PC-3 (cell line): ENCODE measurements at regions of chr3 and their contacts with region 1.

Region 1: DNA sequence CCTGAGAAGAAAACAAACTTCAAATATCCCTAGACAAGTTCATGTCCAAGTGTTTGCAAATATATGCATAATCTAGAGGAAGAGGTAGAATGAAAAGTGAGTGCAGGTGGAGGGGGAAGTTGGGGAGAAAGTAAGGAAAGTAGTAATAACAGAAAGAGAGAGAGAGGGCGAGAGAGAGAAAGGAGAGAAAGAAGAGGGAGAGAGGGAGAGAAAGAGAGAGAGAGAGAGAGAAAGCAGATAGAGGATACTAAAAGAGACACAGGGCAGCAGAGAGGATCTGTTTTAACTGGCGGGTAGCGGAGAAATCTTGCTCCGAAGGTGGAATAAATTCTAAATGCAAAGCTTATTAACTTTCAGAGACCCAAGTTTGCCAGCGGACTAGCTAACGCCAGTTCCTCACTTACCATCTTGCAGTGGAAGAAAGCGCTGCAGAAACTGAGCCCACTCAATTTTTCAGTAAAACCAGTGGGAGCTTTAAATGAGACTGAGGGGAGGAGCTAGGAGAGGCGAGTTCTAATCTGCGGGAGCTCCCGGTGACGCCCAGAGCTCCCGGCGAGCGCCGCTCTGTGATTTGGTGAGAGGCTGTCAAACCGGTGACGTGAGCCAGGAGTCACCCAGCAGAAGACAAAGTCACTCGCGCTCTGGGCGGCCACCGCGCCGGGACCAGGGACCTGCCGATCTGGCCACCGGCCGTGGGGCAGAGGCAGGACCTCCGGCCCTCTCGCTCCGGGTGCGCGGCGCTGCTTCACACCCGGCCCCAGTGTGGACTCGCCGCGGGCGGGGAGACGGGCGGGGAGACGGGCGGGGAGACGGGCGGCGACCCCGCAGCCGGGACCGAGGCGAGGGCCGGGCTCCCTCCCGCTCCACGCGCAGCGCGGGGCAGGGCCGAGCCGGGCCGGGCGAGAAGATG is at the start of gene GMNC:
- DNase-seq: peak; percentile 85
- ATAC-seq: peak; percentile 98
- H3K4me3 ChIP-seq: peak within 1 kb of the TSS; percentile 89
- H3K27ac ChIP-seq: no peak within 1 kb of the TSS
- H3K4me1 ChIP-seq: no peaks in the 10 kb centered on the region
- H3K27me3 ChIP-seq: no peaks in the 10 kb centered on the region
- CTCF ChIP-seq: no peak
- total RNA-seq, gene GMNC: 0.06 TPM in 1 of 2 replicates, not detected in the other

Region 2: DNA sequence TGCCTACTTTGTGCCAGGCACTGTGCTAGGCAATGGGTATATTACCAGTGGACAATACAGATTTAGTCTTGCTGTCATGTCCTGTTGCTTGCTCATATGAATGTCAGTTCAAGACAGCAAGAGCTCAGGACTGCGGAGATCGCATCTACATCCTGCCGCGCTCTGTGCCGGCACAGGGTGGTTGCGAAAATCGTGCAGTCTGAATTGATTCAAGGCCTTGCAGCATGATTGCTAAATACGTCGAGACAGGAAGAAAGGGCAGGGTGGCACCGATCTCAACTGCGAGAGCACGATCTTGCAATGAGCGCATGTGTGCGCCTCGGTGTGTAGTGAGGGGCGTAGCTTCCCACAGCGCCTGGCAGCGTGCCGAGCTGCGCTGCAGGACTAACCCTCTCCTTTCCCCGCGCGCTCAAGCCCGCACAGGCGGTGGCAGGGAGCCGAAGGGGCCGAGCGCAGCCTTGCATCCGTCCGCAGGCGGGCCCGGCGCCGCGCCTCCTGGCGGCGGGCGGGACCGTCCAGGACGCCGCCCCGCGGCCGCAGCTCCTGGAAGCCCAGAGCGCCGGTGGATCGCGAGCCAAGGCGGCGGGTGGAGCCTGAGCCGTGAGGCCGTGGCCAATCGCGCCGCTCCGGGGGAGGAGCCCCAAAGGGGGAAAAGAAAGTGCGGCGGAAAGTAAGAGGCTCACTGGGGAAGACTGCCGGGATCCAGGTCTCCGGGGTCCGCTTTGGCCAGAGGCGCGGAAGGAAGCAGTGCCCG is 348.9 kb before region 1 on chr3 and contains the start of gene IL1RAP:
- CTCF ChIA-PET with region 1: no interaction called
- POLR2A ChIA-PET with region 1: no interaction called
- intact Hi-C with region 1: loop called (anchors 10 kb)
- DNase-seq: peak; percentile 96
- ATAC-seq: peak; percentile 91
- H3K4me3 ChIP-seq: peak within 1 kb of the TSS; percentile 95
- H3K27ac ChIP-seq: peak within 1 kb of the TSS; percentile 24
- H3K4me1 ChIP-seq: peaks cover 40% of the 10 kb centered on the region
- H3K27me3 ChIP-seq: no peaks in the 10 kb centered on the region
- CTCF ChIP-seq: peak; percentile 65
- total RNA-seq, gene IL1RAP: 5.0 and 13.4 TPM in 2 replicates

Region 3: DNA sequence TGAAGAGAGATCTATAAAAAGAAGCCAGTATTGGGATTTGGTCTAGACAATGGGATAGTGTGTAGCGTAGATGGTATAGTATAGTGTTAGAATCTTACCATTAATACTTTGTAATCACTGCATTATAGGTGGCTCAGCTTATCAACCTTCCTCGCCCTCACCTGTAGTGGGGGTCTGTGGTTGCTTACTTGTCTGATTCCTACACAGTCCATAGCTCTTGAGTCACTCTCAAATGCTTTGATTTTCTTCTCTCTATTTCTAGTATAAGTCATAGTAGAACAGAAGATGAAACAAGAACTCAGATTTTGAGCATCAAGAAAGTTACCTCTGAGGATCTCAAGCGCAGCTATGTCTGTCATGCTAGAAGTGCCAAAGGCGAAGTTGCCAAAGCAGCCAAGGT is 233.4 kb before region 1 on chr3:
- CTCF ChIA-PET with region 1: no interaction called
- POLR2A ChIA-PET with region 1: no interaction called
- intact Hi-C with region 1: no loop called
- DNase-seq: no peak
- ATAC-seq: no peak
- H3K4me3 ChIP-seq: no peak overlapping the region
- H3K27ac ChIP-seq: no peak overlapping the region
- H3K4me1 ChIP-seq: no peaks in the 10 kb centered on the region
- H3K27me3 ChIP-seq: no peaks in the 10 kb centered on the region
- CTCF ChIP-seq: no peak

Region 4: DNA sequence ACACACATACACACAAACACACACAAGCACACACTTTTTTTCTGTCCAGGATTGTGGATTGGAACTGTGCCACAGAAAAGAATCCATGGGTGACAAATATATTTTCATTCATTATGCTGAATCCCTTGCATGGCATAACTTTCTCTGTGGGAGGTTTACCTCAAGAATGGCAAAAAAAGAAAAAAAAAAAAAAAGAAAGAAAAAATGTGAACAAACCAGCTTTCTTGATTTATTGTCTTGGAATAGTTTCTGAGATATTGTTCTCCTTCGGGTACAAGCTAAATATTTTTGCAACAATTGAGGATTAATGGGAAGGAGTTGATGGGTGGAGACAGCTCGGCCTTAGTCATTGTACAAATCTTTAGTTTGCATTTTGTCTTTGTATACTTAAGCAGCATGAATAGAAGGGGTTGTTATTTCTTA is 153.1 kb before region 1 on chr3:
- CTCF ChIA-PET with region 1: no interaction called
- POLR2A ChIA-PET with region 1: no interaction called
- intact Hi-C with region 1: loop called (anchors 2 kb)
- DNase-seq: peak; percentile 79
- ATAC-seq: peak; percentile 98
- H3K4me3 ChIP-seq: no peak overlapping the region
- H3K27ac ChIP-seq: no peak overlapping the region
- H3K4me1 ChIP-seq: peaks cover 15% of the 10 kb centered on the region
- H3K27me3 ChIP-seq: no peaks in the 10 kb centered on the region
- CTCF ChIP-seq: no peak

Region 5: GRCh38 chr3:190811775-190812480 is 50.5 kb before region 1 on chr3:
- CTCF ChIA-PET with region 1: no interaction called
- POLR2A ChIA-PET with region 1: no interaction called
- intact Hi-C with region 1: loop called (anchors 5 kb)
- DNase-seq: peak; percentile 83
- ATAC-seq: peak; percentile 80
- H3K4me3 ChIP-seq: peak overlapping the region; percentile 57
- H3K27ac ChIP-seq: no peak overlapping the region
- H3K4me1 ChIP-seq: peaks cover 10% of the 10 kb centered on the region
- H3K27me3 ChIP-seq: no peaks in the 10 kb centered on the region
- CTCF ChIP-seq: peak; percentile 91